Pancreas (tissue), 10 donors: ENCODE measurements at regions of chr1 and their contacts with region 1.

Region 1: GRCh38 chr1:20493839-20494608 is 8.0 kb upstream of the CAMK2N1 start:
- DNase-seq: peak; percentile 63 to 96 (median 84)
- ATAC-seq: peak; percentile 76 to 96 (median 92)
- H3K4me3 ChIP-seq: no peak overlapping the region
- H3K27ac ChIP-seq: no peak overlapping the region
- H3K4me1 ChIP-seq: no peaks in the 10 kb centered on the region
- H3K27me3 ChIP-seq: no peaks in the 10 kb centered on the region
- CTCF ChIP-seq: peak; percentile 93 to 99 (median 95)

Region 2: DNA sequence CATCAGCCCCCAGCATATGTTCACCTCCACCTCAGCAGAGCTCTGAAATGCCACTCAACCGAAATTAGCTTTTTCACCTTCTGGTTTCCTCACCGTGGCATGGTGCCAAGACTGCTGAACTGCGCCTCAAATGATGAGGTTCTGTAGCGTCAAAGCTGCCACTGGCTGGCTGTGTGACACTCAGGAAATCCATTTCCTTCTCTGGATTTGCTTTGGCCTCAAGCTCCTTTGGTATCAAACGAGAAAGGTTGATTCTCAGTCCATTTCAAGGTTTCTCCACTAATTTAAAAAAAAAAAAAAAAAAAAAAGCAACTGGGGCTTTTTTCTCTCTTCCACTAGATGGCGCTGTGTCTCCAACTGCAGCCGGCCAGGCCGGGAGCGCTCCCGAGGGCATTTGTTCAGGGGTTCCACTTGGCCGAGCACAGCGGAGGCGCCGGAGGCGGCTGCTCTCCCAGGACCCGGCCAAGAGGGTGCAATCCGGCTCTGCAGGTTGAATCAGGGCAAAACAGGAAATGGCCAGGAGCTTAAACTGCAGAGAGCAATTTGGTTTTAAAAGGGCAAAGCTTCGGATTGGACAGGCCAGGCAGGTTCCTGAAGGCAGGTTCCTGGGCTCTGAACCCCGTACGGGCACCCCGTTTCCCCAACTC is 281.2 kb before region 1 on chr1:
- intact Hi-C with region 1: loop called in 2 of 3 experiments (anchors 5 kb)
- DNase-seq: peak; percentile 45 to 87 (median 70)
- ATAC-seq: peak; percentile 89 to 96 (median 94)
- H3K4me3 ChIP-seq: no peak overlapping the region
- H3K27ac ChIP-seq: no peak overlapping the region
- H3K4me1 ChIP-seq: peaks cover 0 to 7% (median 0%) of the 10 kb centered on the region in 3 donors
- H3K27me3 ChIP-seq: no peaks in the 10 kb centered on the region
- CTCF ChIP-seq: peak; percentile 48 to 78 (median 69)

Region 3: DNA sequence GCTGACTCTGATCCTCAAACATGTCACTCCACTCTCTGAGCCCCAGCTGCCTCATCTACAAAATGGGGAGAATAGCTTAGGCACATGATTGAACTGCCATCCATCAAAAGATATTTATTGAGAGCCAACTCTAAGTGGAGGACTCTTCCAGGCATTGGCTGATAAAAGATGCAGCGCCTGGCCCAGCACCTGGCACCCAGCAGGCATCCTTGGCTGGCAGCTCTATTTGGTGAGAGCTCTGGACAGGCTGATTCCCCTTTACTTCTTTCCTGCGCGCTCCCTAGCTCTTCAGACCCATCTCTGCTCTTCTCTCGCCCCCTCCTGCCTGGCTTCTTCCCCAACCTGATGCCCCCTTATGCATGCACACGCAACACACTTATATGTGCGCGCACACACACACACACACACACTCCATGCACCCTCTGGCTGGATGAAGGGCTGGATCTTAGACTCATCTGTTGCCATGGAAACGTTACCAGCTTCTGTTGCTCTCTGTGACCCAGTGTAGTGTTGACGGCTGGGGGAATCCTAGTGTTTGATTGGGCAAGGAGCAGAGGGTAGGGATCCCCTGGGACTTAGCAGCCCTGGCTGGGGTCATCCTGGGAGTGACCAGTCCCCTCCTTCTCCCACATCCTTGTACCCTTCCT is 154.1 kb before region 1 on chr1:
- intact Hi-C with region 1: no loop called
- DNase-seq: no peak
- ATAC-seq: no peak
- H3K4me3 ChIP-seq: no peak overlapping the region
- H3K27ac ChIP-seq: no peak overlapping the region
- H3K4me1 ChIP-seq: no peaks in the 10 kb centered on the region
- H3K27me3 ChIP-seq: no peaks in the 10 kb centered on the region
- CTCF ChIP-seq: no peak

Region 4: GRCh38 chr1:20405893-20406604 is 88.0 kb before region 1 on chr1:
- intact Hi-C with region 1: no loop called
- DNase-seq: no peak
- ATAC-seq: peak in 1 of 4 donors; percentile 53
- H3K4me3 ChIP-seq: no peak overlapping the region
- H3K27ac ChIP-seq: no peak overlapping the region
- H3K4me1 ChIP-seq: no peaks in the 10 kb centered on the region
- H3K27me3 ChIP-seq: no peaks in the 10 kb centered on the region
- CTCF ChIP-seq: no peak